MCF 10A (cell line): ENCODE measurements at regions of chr3 and their contacts with region 1.

Region 1: GRCh38 chr3:86245360-86245759 is 745.6 kb downstream of the VGLL3 start:
- DNase-seq: peak; percentile 3
- H3K4me3 Mint-ChIP-seq: no peak overlapping the region
- H3K27ac Mint-ChIP-seq: no peak overlapping the region
- H3K4me1 Mint-ChIP-seq: no peaks in the 10 kb centered on the region
- H3K27me3 Mint-ChIP-seq: peaks cover 25% of the 10 kb centered on the region
- CTCF ChIP-seq: peak; percentile 38

Region 2: DNA sequence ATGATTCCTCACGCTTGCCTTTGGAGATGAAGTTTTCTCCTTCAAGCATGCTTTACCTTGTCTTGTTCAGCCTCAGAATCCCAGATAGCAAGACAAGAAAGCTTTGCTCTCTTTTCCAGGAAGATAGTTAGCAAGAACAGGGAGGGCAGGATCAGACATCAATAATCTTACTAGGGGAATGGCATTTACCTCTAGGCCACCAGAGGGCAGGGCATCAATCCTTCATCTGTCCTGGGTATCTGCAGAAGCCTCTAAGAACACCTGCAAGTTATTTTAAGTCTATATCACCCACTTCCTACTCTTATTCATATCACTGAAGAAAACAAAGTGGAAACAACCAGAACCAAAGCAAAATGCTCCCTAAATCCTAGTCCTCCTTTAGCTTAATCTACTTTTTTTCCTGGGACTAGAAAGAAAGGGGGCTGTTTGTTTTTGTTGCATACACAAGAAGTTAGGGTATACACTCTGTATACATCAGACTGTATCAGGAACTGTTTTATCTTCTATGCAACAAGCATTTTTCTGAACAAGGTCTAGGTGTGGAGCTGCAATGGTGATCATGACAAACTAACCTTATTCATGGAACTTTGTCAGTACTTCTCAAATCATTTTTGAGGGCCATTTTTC is 424.1 kb before region 1 on chr3:
- CTCF ChIA-PET with region 1: interaction called, 12 read pairs
- POLR2A ChIA-PET with region 1: no interaction called
- intact Hi-C with region 1: loop called (anchors 1 kb)
- DNase-seq: peak; percentile 46
- H3K4me3 Mint-ChIP-seq: no peak overlapping the region
- H3K27ac Mint-ChIP-seq: no peak overlapping the region
- H3K4me1 Mint-ChIP-seq: no peaks in the 10 kb centered on the region
- H3K27me3 Mint-ChIP-seq: peaks cover 24% of the 10 kb centered on the region
- CTCF ChIP-seq: peak; percentile 43

Region 3: GRCh38 chr3:86180696-86181095 is 64.7 kb before region 1 on chr3:
- CTCF ChIA-PET with region 1: no interaction called
- POLR2A ChIA-PET with region 1: no interaction called
- intact Hi-C with region 1: loop called (anchors 5 kb)
- DNase-seq: peak; percentile 49
- H3K4me3 Mint-ChIP-seq: no peak overlapping the region
- H3K27ac Mint-ChIP-seq: no peak overlapping the region
- H3K4me1 Mint-ChIP-seq: no peaks in the 10 kb centered on the region
- H3K27me3 Mint-ChIP-seq: peaks cover 12% of the 10 kb centered on the region
- CTCF ChIP-seq: peak; percentile 20

Region 4: GRCh38 chr3:86257955-86258641 is 12.7 kb after region 1 on chr3:
- CTCF ChIA-PET with region 1: no interaction called
- POLR2A ChIA-PET with region 1: no interaction called
- intact Hi-C with region 1: no loop called
- DNase-seq: no peak
- H3K4me3 Mint-ChIP-seq: no peak overlapping the region
- H3K27ac Mint-ChIP-seq: no peak overlapping the region
- H3K4me1 Mint-ChIP-seq: no peaks in the 10 kb centered on the region
- H3K27me3 Mint-ChIP-seq: peaks cover 41% of the 10 kb centered on the region
- CTCF ChIP-seq: no peak

Region 5: GRCh38 chr3:86269364-86270155 is 24.2 kb after region 1 on chr3:
- CTCF ChIA-PET with region 1: no interaction called
- POLR2A ChIA-PET with region 1: no interaction called
- intact Hi-C with region 1: no loop called
- DNase-seq: no peak
- H3K4me3 Mint-ChIP-seq: no peak overlapping the region
- H3K27ac Mint-ChIP-seq: no peak overlapping the region
- H3K4me1 Mint-ChIP-seq: no peaks in the 10 kb centered on the region
- H3K27me3 Mint-ChIP-seq: peaks cover 49% of the 10 kb centered on the region
- CTCF ChIP-seq: no peak